ENCODE measurements at regions of chr17 and their contacts with region 1.

Region 1: GRCh38 chr17:43994272-43995149 is 9.9 kb upstream of the NAGS start:
- DNase-seq: peak; percentile 87
- ATAC-seq: peak; percentile 90
- H3K4me3 ChIP-seq: peak overlapping the region; percentile 70
- H3K27ac ChIP-seq: no peak overlapping the region
- H3K4me1 ChIP-seq: peaks cover 10% of the 10 kb centered on the region; the same call in 1 of the 2 replicates
- H3K27me3 ChIP-seq: no peaks in the 10 kb centered on the region
- CTCF ChIP-seq: peak; percentile 97

Region 2: DNA sequence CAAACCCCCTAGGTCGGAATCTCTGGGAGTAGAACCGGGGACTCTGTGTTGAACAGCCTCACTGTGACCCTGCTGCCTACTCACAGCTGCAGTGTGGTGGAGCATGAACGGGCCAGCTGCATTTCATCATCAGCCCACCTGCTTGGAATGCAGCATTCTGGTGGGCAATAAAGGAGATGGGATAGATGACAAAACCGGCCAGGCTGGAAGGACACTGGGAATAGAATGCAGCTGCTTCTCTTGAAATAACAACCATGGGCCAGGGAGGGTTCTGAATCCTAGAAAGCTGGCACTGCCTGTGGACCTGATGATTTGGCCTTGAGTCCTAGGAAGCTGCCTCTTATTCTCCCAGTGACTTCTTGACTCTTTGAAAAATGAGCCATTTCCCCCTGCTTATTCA is 190.8 kb before region 1 on chr17:
- CTCF ChIA-PET with region 1: no interaction called
- POLR2A ChIA-PET with region 1: no interaction called
- intact Hi-C with region 1: no loop called
- DNase-seq: no peak
- ATAC-seq: no peak
- H3K4me3 ChIP-seq: no peak overlapping the region
- H3K27ac ChIP-seq: no peak overlapping the region
- H3K4me1 ChIP-seq: no peaks in the 10 kb centered on the region
- H3K27me3 ChIP-seq: no peaks in the 10 kb centered on the region
- CTCF ChIP-seq: no peak

Region 3: GRCh38 chr17:43878260-43879175 is 116.0 kb before region 1 on chr17:
- CTCF ChIA-PET with region 1: no interaction called
- POLR2A ChIA-PET with region 1: no interaction called
- intact Hi-C with region 1: loop called (anchors 1 kb)
- DNase-seq: peak; percentile 90
- ATAC-seq: peak; percentile 98
- H3K4me3 ChIP-seq: no peak overlapping the region
- H3K27ac ChIP-seq: no peak overlapping the region
- H3K4me1 ChIP-seq: peaks cover 6% of the 10 kb centered on the region; the same call in 1 of the 2 replicates
- H3K27me3 ChIP-seq: no peaks in the 10 kb centered on the region
- CTCF ChIP-seq: peak; percentile 96

Region 4: GRCh38 chr17:43900183-43900857 is 94.2 kb before region 1 on chr17:
- CTCF ChIA-PET with region 1: interaction called, 10 read pairs
- POLR2A ChIA-PET with region 1: no interaction called
- intact Hi-C with region 1: no loop called
- DNase-seq: peak; percentile 90
- ATAC-seq: peak; percentile 99
- H3K4me3 ChIP-seq: peak overlapping the region; percentile 62
- H3K27ac ChIP-seq: no peak overlapping the region
- H3K4me1 ChIP-seq: 0 out of 2 replicates have a peak, but pooled peaks cover 5% of the 10 kb centered on the region
- H3K27me3 ChIP-seq: peaks cover 2% of the 10 kb centered on the region
- CTCF ChIP-seq: no peak

Region 5: DNA sequence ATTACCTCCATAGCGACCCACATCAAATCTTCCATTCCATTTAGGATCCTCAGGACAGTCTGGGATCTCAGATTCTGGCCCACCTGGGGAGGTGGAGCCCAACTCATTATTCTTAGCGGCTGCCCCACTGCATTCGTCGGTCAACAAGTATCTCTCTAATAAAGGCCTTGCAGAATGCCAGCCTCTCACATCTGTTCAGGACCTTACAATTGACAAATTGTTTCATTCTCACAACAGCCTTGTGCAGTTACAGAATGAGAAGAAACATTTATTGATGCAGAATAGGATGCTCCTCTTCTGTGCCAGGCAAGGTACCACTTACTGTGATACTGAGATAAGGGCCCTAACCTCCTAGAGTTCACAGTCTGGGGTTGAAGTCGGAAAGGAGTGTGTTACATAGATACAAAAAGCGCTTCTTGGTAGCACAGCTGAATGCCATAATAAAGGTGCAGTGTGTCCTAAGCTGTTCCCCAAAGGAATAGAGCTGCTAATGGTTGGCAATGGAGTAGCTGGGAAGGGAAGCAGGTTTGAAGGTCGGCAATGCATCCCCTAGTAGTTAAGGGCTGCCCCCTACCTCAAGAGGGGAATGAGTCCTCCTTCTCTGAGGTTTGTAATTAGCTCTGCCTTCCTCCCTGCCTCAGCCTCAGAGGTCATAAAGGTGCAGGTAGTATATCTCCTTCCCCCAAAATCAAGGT is 84.8 kb before region 1 on chr17:
- CTCF ChIA-PET with region 1: interaction called, 3 read pairs
- POLR2A ChIA-PET with region 1: no interaction called
- intact Hi-C with region 1: loop called (anchors 1 kb)
- DNase-seq: no peak
- ATAC-seq: no peak
- H3K4me3 ChIP-seq: no peak overlapping the region
- H3K27ac ChIP-seq: no peak overlapping the region
- H3K4me1 ChIP-seq: no peaks in the 10 kb centered on the region
- H3K27me3 ChIP-seq: peaks cover 50% of the 10 kb centered on the region
- CTCF ChIP-seq: no peak

Region 6: GRCh38 chr17:44804302-44805089 is 810.0 kb after region 1 on chr17:
- CTCF ChIA-PET with region 1: no interaction called
- POLR2A ChIA-PET with region 1: no interaction called
- intact Hi-C with region 1: no loop called
- DNase-seq: no peak
- ATAC-seq: no peak
- H3K4me3 ChIP-seq: no peak overlapping the region
- H3K27ac ChIP-seq: no peak overlapping the region
- H3K4me1 ChIP-seq: no peaks in the 10 kb centered on the region; the same call in 1 of the 2 replicates
- H3K27me3 ChIP-seq: no peaks in the 10 kb centered on the region
- CTCF ChIP-seq: no peak

Measured in PC-3 (cell line).